HCT116 (cell line): ENCODE measurements at regions of chr5 and their contacts with region 1.

Region 1: DNA sequence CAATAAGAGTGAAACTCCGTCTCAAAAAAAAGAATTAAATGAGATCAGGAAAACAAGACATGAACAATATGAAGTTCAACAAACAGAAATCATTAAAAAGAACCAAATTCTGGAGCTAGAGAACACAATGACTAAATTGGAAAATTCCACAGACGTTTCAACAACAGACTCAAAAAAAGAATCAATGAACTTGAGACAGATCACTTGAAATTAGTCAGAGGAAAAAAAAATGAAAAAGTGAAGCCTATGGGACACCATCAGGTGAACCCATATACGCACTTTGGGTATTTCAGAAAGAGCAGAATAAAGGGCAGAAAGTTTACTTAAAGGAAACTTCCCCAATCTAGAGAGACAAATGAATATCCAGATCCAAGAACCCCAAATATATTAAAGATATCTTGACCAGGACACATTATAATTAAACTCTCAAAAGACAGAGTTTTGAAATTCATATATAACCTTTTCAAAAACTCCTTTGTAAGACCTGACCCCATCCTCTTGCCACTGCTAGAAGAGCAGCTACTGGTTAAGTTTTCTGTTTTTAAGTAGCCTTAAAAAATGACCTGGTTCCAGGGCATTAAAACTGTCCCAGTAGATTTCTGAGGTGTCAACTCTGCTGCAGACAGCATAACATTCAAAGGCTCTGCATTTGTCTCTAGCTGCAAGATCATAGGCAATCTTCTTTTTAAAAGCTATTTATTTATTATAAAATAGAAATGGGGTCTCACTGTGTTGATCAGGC is 7.7 kb upstream of the MATR3 start:
- DNase-seq: no peak
- ATAC-seq: no peak
- H3K4me3 ChIP-seq: no peak overlapping the region
- H3K27ac ChIP-seq: peak overlapping the region; percentile 20; the same call in 1 of the 2 replicates
- H3K4me1 ChIP-seq: peaks cover 0 to 8% of the 10 kb centered on the region in 2 experiments; a peak in 2 of 4 replicates
- H3K27me3 ChIP-seq: no peaks in the 10 kb centered on the region
- CTCF ChIP-seq: no peak
- POLR2A ChIP-seq: no peak
- RAD21 ChIP-seq: no peak

Region 2: DNA sequence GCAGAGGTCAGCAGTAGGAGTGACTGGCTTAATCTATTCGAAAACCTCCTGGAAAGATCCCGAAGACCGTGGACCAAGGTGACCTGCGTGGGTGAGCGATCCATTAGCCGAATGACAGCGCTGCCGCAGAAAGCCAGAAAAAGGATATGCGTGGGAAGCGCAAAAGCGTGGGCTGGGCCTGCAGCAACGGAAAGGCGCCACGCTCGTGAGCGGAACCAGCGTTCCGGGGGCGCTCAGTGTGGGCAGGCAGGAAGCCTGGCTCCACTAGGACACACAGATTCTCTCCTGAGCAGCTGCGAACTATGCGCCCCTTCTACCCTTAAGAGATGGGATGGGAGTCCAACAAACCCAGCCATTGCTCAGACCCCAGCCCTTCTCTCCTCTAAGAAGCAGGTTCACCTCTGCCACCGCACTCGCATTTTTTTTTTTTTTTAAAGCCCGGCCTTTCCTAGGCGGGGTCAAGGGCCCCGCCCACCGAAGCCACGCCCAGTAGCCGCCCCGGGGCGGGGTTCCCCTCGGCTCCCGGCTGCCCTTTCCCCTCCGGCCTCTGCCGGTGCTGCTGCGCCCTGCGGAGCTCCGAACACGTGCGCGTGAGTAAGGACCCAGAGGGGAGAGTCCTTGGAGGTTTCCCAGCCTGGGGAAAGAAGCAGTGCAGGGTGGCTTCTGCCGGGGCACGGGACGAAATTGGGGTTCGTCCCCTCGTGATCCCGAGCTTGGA is 12.1 kb before region 1 on chr5:
- CTCF ChIA-PET with region 1: no interaction called
- POLR2A ChIA-PET with region 1: interaction called, 11 read pairs
- RAD21 ChIA-PET with region 1: no interaction called
- intact Hi-C with region 1: no loop called
- DNase-seq: peak; percentile 74
- ATAC-seq: peak; percentile 76
- H3K4me3 ChIP-seq: peak overlapping the region; percentile 87 to 89
- H3K27ac ChIP-seq: peak overlapping the region; percentile 86
- H3K4me1 ChIP-seq: peaks cover 44 to 68% of the 10 kb centered on the region in 2 experiments
- H3K27me3 ChIP-seq: no peaks in the 10 kb centered on the region
- CTCF ChIP-seq: no peak
- POLR2A ChIP-seq: peak; percentile 95
- RAD21 ChIP-seq: no peak

Region 3: DNA sequence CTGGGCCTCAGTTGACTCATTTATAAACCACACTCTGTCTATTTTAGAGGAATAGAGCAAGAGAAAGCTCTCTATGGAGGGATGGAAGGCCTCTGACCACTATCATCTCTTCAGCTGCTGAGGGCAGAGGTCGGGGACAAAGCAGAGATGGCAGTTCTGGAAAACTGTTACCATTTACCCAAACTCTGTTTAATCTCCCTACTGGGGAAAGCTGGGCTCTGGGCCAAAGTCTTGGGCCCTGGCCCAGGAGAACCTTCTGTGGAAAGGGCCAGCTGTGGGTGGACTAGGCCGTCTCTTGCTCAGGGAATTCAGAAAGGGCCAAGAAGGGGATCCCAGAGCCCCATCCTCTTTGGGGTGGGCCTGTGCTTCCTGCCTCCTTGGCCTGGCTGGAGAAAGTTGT is 609.8 kb after region 1 on chr5:
- CTCF ChIA-PET with region 1: no interaction called
- POLR2A ChIA-PET with region 1: no interaction called
- RAD21 ChIA-PET with region 1: no interaction called
- intact Hi-C with region 1: no loop called
- DNase-seq: no peak
- ATAC-seq: no peak
- H3K4me3 ChIP-seq: no peak overlapping the region
- H3K27ac ChIP-seq: no peak overlapping the region
- H3K4me1 ChIP-seq: no peaks in the 10 kb centered on the region
- H3K27me3 ChIP-seq: peaks cover 11% of the 10 kb centered on the region; the same call in 1 of the 2 replicates
- CTCF ChIP-seq: no peak
- POLR2A ChIP-seq: no peak
- RAD21 ChIP-seq: no peak

Region 4: DNA sequence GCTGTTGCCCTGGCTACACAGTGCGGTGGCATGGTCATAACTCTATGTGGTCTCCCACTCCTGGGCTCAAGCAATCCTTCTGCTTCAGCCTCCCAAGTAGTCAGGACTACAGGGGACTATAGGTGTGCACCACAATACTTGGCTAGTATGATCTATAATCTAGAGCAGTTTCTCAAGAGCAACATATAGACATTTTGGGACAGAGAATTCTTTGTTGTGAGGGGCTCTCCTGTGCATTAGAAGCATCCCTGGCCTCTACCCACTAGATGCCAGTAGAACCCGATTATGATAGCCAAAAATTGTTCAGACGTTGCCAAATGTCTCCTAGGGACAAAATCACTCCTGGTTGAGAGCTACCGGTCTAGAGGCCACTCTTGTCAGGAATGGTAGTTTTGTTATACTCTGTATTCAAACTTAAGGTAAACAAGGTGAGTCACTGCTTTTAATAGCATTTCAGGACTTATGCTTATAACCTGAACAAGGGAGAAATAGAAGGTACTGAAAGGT is 1123.0 kb after region 1 on chr5:
- CTCF ChIA-PET with region 1: no interaction called
- POLR2A ChIA-PET with region 1: no interaction called
- RAD21 ChIA-PET with region 1: no interaction called
- intact Hi-C with region 1: no loop called
- DNase-seq: no peak
- ATAC-seq: no peak
- H3K4me3 ChIP-seq: no peak overlapping the region
- H3K27ac ChIP-seq: no peak overlapping the region
- H3K4me1 ChIP-seq: peaks cover 2 to 7% of the 10 kb centered on the region in 2 experiments; a peak in 3 of 4 replicates
- H3K27me3 ChIP-seq: no peaks in the 10 kb centered on the region
- CTCF ChIP-seq: no peak
- POLR2A ChIP-seq: no peak
- RAD21 ChIP-seq: no peak